ENCODE measurements at regions of chr2 and their contacts with region 1.

Region 1: DNA sequence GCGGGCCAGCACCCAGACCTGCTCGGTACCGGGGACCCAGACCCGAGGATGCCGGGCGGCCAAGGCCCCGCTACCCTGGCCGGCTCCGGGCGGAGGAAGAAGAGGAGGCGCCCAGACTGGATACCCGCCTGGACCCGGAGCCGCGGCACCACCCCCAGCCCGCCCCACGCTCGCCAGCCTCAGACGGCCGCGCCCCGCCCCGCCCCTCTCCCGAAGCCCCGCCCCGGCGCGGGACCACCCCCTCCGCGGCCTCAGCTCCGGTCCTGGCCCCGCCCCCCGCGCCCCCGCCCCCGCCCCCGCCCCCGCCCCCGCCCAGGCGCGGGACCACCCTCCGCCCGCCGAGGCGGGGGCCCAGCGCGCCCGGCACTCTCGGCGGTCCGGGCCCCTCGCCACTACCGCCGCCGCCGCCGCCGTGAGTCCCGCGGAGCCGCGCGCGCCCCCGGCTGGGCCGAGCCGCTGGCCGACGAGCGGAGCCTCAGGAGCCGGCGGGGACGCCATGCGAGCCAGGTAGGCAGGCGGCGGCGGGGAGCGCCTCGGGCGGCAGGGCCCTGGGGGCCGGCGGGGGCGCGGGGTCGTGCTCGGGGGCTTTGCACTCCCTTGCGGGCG is at the start of gene SH3BP4:
- DNase-seq: peak; percentile 34 to 87 (median 79)
- H3K4me3 ChIP-seq: peak within 1 kb of the TSS; percentile 59 to 91 (median 78)
- H3K27ac ChIP-seq: peak within 1 kb of the TSS; percentile 59 to 98 (median 93)
- H3K27me3 ChIP-seq: peaks cover 0 to 30% (median 3%) of the 10 kb centered on the region in 45 donors
- CTCF ChIP-seq: no peak
- total RNA-seq, gene SH3BP4: 10.0 to 57.7 (median 23.5) TPM

Region 2: DNA sequence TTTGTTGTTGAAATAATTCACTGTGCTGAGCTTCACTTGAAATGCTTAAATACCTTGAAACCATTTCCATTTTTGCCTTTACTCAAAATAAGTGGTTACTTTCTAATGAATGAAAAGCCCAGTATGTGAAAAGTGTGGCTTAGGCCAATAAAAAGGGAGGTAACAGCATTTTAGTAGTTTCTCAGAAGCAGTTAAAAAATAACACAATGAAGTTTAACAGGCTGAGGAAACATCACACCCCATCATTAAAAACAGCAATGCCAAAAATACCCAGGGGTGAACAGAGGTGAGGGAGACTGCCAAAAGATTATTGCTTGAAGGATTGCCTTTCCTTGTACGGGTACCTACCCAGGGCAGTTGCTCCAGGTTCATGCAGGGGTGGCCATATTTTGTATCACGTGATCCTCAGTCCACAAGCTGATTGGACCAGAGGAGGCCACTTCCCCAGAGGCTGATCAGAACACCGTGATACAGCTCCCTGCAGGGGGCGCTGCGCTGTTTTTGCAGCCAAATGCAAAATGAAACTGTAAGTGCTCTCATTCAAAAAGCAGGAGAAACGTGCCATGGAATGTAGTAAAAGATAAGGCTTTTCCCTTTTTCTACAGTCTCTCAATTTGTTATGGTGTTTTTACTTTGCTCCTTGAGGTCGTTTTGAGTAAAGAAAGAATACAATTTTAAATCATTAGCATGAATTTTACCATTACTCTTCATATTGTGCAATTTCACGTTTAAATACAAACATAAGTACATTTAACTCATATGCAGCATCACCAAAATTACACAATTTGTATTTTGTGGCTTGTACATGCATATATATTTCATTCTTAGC is 70.1 kb before region 1 on chr2:
- intact Hi-C with region 1: loop called (anchors 5 kb)
- DNase-seq: peak; percentile 23 to 93 (median 86)
- H3K4me3 ChIP-seq: peak overlapping the region in 53 of 59 donors; percentile 6 to 62 (median 38)
- H3K27ac ChIP-seq: peak overlapping the region in 37 of 59 donors; percentile 1 to 74 (median 51)
- H3K27me3 ChIP-seq: peaks cover 0 to 6% (median 0%) of the 10 kb centered on the region in 45 donors
- CTCF ChIP-seq: peak; percentile 61 to 98 (median 88)

Region 3: DNA sequence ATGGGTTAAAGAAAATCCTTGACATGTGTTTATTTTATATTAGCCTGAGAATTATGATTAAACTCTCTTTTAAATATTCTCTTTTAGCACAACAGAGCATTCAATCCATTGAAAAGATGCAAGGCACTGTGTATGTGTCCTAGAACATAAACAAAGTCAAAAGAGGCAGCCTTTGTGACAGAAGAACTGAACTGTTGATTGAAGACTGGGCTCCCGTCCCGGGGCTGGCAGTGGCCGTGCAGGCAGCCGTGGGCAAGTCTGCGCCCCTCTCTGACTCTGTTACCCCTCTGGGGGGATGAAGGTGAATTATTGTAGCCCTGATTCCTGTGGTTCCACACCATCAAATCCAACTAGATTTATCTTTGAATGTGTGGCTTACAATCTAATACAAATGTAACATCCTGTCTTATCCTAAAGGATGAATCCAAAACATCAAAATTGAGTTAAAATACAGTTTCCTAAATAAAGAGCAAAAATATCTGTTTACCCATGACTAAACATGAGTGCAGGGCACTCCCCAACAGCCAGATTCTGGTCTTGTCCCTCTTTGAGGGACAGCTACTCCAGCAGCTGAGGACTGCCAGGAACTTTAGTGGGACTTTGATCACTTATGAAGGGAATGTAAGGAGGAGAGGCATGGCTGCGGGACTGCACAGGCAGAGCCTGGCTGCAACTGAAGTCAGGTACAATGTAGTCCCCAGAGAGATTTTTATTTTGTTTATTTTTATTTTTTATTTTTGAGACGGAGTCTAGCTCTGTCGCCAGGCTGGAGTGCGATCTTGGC is 37.2 kb before region 1 on chr2:
- intact Hi-C with region 1: loop called in 1 of 2 experiments (anchors 2 kb)
- DNase-seq: peak in 9 of 10 donors; percentile 61 to 77 (median 69)
- H3K4me3 ChIP-seq: peak overlapping the region in 7 of 59 donors; percentile 3 to 31 (median 15)
- H3K27ac ChIP-seq: peak overlapping the region; percentile 51 to 100 (median 95)
- H3K27me3 ChIP-seq: no peaks in the 10 kb centered on the region
- CTCF ChIP-seq: peak in 2 of 56 donors; percentile 15 to 28

Region 4: GRCh38 chr2:234919711-234920110 is 32.1 kb before region 1 on chr2:
- intact Hi-C with region 1: loop called (anchors 2 kb)
- DNase-seq: no peak
- H3K4me3 ChIP-seq: no peak overlapping the region
- H3K27ac ChIP-seq: peak overlapping the region in 2 of 59 donors; percentile 2 to 21
- H3K27me3 ChIP-seq: no peaks in the 10 kb centered on the region
- CTCF ChIP-seq: no peak

Region 5: GRCh38 chr2:234996069-234996940 is 44.5 kb after region 1 on chr2:
- intact Hi-C with region 1: loop called in 1 of 2 experiments (anchors 2 kb)
- DNase-seq: no peak
- H3K4me3 ChIP-seq: no peak overlapping the region
- H3K27ac ChIP-seq: peak overlapping the region in 58 of 59 donors; percentile 3 to 89 (median 75)
- H3K27me3 ChIP-seq: no peaks in the 10 kb centered on the region
- CTCF ChIP-seq: no peak

Region 6: GRCh38 chr2:235050992-235051351 is 99.2 kb after region 1 on chr2:
- intact Hi-C with region 1: loop called (anchors 5 kb)
- DNase-seq: peak; percentile 77 to 97 (median 90)
- H3K4me3 ChIP-seq: no peak overlapping the region
- H3K27ac ChIP-seq: peak overlapping the region in 53 of 59 donors; percentile 1 to 92 (median 75)
- H3K27me3 ChIP-seq: no peaks in the 10 kb centered on the region
- CTCF ChIP-seq: peak in 37 of 56 donors; percentile 6 to 58 (median 32)

Region 7: DNA sequence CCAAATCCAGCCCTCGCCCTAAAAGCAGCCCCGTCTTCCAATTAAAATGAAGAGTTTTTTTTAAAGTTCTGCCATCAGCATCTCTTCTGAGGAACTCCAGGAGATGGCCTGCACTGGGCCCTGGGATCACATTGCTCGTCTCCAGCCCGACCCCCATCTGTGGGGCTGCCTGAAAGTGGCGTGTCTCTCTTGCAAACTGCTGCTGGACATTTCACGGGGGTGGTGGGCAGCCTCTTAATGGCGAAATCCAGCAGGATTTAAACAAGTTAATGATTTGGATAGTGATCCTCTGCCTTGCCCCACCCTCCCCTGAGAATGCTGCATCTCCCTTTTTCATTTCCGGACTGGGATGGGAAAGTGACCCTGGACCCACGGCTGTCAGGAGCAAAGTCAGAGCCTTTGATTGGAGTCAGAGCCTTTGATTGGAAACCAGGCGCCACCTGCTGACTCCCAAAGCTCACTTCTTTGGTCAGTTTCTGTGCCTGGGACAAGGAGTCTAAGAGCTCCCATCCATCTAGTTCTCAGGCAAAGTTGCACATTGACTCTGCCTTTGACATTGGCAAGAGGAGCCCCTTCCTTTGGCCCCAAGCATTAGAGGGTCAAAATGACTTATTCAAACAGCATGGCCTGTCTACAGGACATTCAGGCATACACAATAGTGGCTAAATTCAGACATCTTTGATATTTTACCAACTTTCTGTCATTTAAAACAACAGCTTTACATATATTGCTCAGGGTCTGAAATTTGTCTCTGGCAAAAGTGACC is 155.3 kb after region 1 on chr2:
- intact Hi-C with region 1: loop called in 1 of 2 experiments (anchors 10 kb)
- DNase-seq: peak in 8 of 10 donors; percentile 15 to 80 (median 67)
- H3K4me3 ChIP-seq: no peak overlapping the region
- H3K27ac ChIP-seq: no peak overlapping the region
- H3K27me3 ChIP-seq: no peaks in the 10 kb centered on the region
- CTCF ChIP-seq: peak in 55 of 56 donors; percentile 20 to 84 (median 67)